ENCODE measurements at regions of chr19 and their contacts with region 1.

Region 1: GRCh38 chr19:44093931-44094765 is at the start of gene ZNF224:
- DNase-seq: peak; percentile 87
- ATAC-seq: peak; percentile 94
- H3K4me3 ChIP-seq: peak within 1 kb of the TSS; percentile 67 to 95 (median 89)
- H3K4me3 Mint-ChIP-seq: peak within 1 kb of the TSS; percentile 96
- H3K27ac ChIP-seq: peak within 1 kb of the TSS; percentile 39 to 70
- H3K27ac Mint-ChIP-seq: peak within 1 kb of the TSS; percentile 90
- H3K4me1 ChIP-seq: peaks cover 4 to 9% of the 10 kb centered on the region in 2 donors
- H3K4me1 Mint-ChIP-seq: peaks cover 22% of the 10 kb centered on the region
- H3K27me3 ChIP-seq: no peaks in the 10 kb centered on the region
- H3K27me3 Mint-ChIP-seq: no peaks in the 10 kb centered on the region
- CTCF ChIP-seq: no peak
- total RNA-seq, gene ZNF224: 94.2 and 96.1 TPM in 2 replicates

Region 2: DNA sequence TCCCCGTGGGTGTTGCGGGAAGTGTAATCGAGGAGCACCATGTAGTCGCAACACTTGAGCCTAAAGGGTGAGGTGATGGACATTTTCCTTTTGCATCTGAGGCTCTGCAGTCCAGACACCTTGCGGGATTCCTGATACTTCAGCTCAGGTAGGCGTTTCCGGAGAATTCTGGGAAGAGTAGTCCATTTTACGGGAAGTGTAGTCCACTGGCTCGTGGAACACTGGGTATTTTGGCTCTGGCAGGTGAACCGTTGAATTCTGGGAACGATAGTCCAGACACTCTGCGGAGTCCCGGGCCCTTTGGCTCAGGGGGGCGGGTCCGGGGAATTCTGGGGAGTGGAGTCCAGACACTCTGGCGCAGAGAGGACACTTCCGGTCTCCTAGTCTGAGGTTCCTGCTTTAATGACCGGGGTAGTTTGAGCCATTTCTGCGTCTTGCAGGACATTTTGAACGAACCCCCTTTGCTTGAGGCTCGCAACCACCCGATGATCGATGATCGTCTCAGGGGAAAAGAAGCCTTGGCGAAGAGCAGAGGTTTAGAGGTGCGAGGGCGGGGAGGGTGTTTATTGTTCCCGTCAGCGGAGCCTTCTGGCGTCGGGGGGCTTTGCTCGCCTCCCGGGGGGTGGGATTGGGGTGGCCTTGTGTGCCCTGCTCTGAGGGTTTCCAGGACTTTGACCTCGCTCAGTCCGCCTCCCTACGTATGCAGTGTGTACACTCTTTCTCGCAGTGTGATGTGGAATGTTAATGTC is 42.3 kb before region 1 on chr19 and contains the start of gene ZNF223:
- CTCF ChIA-PET with region 1: interaction called, 3 read pairs
- POLR2A ChIA-PET with region 1: no interaction called
- intact Hi-C with region 1: loop called (anchors 2 kb)
- DNase-seq: peak; percentile 59
- ATAC-seq: peak; percentile 90
- H3K4me3 ChIP-seq: peak within 1 kb of the TSS; percentile 62 to 79 (median 73)
- H3K4me3 Mint-ChIP-seq: peak within 1 kb of the TSS; percentile 97
- H3K27ac ChIP-seq: peak within 1 kb of the TSS in 1 of 2 donors; percentile 53
- H3K27ac Mint-ChIP-seq: peak within 1 kb of the TSS; percentile 82
- H3K4me1 ChIP-seq: peaks cover 13 to 22% of the 10 kb centered on the region in 2 donors
- H3K4me1 Mint-ChIP-seq: peaks cover 27% of the 10 kb centered on the region
- H3K27me3 ChIP-seq: peaks cover 0 to 3% (median 0%) of the 10 kb centered on the region in 4 experiments
- H3K27me3 Mint-ChIP-seq: peaks cover 16% of the 10 kb centered on the region
- CTCF ChIP-seq: no peak
- total RNA-seq, gene ZNF223: 7.3 and 9.5 TPM in 2 replicates

Region 3: GRCh38 chr19:44141191-44142058 is 47.3 kb after region 1 on chr19 and contains the start of gene ZNF234:
- CTCF ChIA-PET with region 1: no interaction called
- POLR2A ChIA-PET with region 1: no interaction called
- intact Hi-C with region 1: loop called (anchors 1 kb)
- DNase-seq: peak; percentile 81
- ATAC-seq: peak; percentile 95
- H3K4me3 ChIP-seq: peak within 1 kb of the TSS; percentile 64 to 93 (median 81)
- H3K4me3 Mint-ChIP-seq: peak within 1 kb of the TSS; percentile 93
- H3K27ac ChIP-seq: peak within 1 kb of the TSS; percentile 61 to 77
- H3K27ac Mint-ChIP-seq: peak within 1 kb of the TSS; percentile 87
- H3K4me1 ChIP-seq: peaks cover 13 to 15% of the 10 kb centered on the region in 2 donors
- H3K4me1 Mint-ChIP-seq: peaks cover 27% of the 10 kb centered on the region
- H3K27me3 ChIP-seq: no peaks in the 10 kb centered on the region
- H3K27me3 Mint-ChIP-seq: no peaks in the 10 kb centered on the region
- CTCF ChIP-seq: no peak
- total RNA-seq, gene ZNF234: 24.1 and 27.5 TPM in 2 replicates

Region 4: DNA sequence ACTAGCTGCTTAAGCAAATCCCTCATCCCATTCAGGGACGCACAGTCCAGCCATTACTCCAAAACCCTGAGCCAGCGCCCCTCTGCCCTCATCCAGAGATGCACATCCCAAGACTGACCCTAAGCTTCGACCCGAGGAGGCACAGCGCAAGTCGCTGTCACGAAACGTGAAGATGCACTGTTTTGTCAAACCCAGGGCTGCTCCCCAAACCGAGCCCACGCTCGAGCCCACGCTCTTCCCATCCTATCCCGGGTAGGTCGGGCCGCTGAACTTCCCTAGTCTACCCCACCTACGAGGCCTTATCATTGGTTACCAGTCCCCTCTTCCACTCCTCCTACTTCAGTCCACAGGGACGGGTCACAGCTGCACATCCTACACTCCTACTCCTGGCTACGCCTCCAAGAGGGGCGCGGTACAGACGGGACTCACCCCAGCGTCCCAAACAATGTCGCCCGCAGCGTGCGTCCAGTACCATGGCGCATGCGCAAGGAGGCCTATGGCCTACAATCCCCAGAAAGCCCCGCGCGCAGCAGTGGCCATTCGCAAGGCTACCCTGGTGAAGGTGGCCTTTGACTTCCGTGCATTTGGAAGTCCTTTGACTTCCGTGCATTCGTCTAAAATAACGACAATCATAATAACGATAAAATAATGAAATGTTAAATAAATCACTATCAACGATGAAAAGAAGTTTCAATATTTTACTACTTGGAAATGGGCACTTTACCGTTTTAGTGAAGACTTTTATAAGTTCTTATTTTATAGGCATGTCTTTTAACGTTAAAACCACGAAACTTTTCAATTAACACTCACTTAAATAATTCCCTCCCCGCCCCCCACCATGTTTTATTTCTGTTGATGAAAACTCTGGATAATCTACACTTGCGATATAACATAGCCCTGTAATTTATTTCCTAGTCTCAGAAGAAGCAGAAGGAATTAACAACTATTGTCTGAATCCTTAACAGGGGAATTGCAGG is 307.3 kb after region 1 on chr19 and contains the start of gene ZNF285:
- CTCF ChIA-PET with region 1: no interaction called
- POLR2A ChIA-PET with region 1: no interaction called
- intact Hi-C with region 1: loop called (anchors 10 kb)
- DNase-seq: peak; percentile 89
- ATAC-seq: peak; percentile 99
- H3K4me3 ChIP-seq: peak within 1 kb of the TSS; percentile 59 to 77 (median 73)
- H3K4me3 Mint-ChIP-seq: peak within 1 kb of the TSS; percentile 96
- H3K27ac ChIP-seq: no peak within 1 kb of the TSS
- H3K27ac Mint-ChIP-seq: peak within 1 kb of the TSS; percentile 72
- H3K4me1 ChIP-seq: peaks cover 0 to 13% of the 10 kb centered on the region in 2 donors
- H3K4me1 Mint-ChIP-seq: peaks cover 10% of the 10 kb centered on the region
- H3K27me3 ChIP-seq: peaks cover 0 to 4% (median 1%) of the 10 kb centered on the region in 4 experiments
- H3K27me3 Mint-ChIP-seq: peaks cover 5% of the 10 kb centered on the region
- CTCF ChIP-seq: no peak
- total RNA-seq, gene ZNF285: 7.6 and 7.9 TPM in 2 replicates

Measured in B cell (primary cell).